Activated T-helper 1 cell treated with anti-CD3 and anti-CD28 coated beads, Interleukin-12 subunit alpha, Interleukin-12 subunit beta, Interleukin-2, Interleukin-4 antibody, amounts not matched to agents 30 ng/mL and 10 ng/mL and 1 ng/mL, durations not matched to agents 14 hours and 24 hours and 36 hours (primary cell): ENCODE measurements at regions of chr9 and their contacts with region 1.

Region 1: DNA sequence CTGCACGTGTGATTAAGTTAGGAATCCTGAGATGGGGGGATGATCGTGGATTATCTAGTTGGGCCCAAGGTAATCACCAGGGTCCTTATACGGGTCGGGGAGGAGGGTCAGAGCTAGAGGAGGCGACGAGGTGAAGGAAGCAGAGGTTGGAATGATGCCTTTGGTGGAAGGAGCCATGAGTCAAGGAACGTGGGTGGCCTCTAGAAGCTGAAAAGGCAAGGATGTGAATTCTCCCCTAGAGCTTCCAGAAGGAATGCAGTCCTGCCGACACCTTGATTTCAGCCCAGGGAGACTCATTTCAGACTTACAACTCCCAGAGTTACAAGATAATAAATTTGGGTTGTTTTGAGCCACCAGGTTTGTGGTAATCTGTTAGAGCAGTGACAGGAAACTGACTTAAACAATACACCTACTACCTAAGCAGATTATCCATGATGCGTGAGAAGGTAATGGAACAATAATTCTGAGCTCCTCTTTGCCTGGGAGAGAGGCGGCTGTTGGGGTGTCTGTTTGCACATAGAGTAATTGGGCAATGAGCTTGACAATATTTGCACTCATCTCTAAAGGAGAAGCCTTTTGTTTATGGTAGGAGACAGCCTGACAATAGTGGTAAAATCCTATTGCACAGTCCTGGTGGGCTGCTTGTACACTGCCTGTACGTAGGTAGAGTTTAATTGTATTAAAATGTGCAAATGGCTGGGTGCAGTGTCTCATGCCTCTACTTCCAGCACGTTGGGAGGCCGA is 129.3 kb upstream of the IER5L start:
- DNase-seq: no peak
- H3K4me3 Mint-ChIP-seq: no peak overlapping the region
- H3K27ac Mint-ChIP-seq: no peak overlapping the region
- H3K4me1 Mint-ChIP-seq: peaks cover 11% of the 10 kb centered on the region
- H3K27me3 Mint-ChIP-seq: peaks cover 4% of the 10 kb centered on the region

Region 2: DNA sequence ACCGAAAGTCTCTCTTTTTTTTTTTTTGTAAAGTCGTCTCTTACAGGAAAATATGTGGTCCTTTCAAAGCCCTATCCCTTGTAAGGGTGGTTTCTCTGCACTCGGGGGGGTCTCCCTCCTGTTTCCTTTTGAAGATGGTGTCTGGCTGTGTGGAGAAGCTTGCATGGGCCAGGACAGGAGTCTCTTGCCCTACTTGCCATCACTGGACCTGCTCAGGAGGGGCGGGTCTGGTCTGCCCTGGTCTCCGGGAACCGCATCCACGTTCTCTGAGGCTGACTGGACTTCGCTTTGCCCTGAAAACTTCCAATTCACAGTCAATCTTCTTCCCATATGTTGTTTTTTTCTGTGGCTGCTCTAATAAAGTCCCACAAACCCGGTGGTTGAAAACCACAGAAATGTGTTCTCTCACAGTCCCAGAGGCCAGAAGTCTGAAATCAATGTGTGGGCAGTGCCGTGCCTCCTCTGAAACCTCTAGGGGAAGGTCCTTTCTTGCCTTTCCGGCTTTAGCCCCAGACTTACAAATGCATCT is 36.4 kb before region 1 on chr9:
- intact Hi-C with region 1: loop called (anchors 1 kb)
- DNase-seq: no peak
- H3K4me3 Mint-ChIP-seq: peak overlapping the region; percentile 63
- H3K27ac Mint-ChIP-seq: peak overlapping the region; percentile 72
- H3K4me1 Mint-ChIP-seq: peaks cover 29% of the 10 kb centered on the region
- H3K27me3 Mint-ChIP-seq: peaks cover 14% of the 10 kb centered on the region

Region 3: GRCh38 chr9:129282272-129283211 is 24.9 kb before region 1 on chr9:
- intact Hi-C with region 1: no loop called
- DNase-seq: no peak
- H3K4me3 Mint-ChIP-seq: no peak overlapping the region
- H3K27ac Mint-ChIP-seq: no peak overlapping the region
- H3K4me1 Mint-ChIP-seq: no peaks in the 10 kb centered on the region
- H3K27me3 Mint-ChIP-seq: peaks cover 5% of the 10 kb centered on the region